Thyroid gland (tissue), 4 donors: ENCODE measurements at regions of chr12 and their contacts with region 1.

Region 1: GRCh38 chr12:56636675-56637540 is 6.8 kb upstream of the BAZ2A start:
- DNase-seq: peak; percentile 99 to 100
- H3K4me3 ChIP-seq: peak overlapping the region in 2 of 3 donors; percentile 57 to 89
- H3K27ac ChIP-seq: peak overlapping the region; percentile 96 to 97 (median 97)
- H3K4me1 ChIP-seq: peaks cover 37 to 43% of the 10 kb centered on the region in 2 donors
- H3K27me3 ChIP-seq: no peaks in the 10 kb centered on the region
- CTCF ChIP-seq: peak in 5 of 6 experiments; percentile 9 to 69 (median 65)
- POLR2A ChIP-seq: peak in 1 of 2 donors; percentile 66

Region 2: GRCh38 chr12:56518570-56518969 is 118.3 kb before region 1 on chr12:
- intact Hi-C with region 1: loop called (anchors 10 kb)
- DNase-seq: no peak
- H3K4me3 ChIP-seq: no peak overlapping the region
- H3K27ac ChIP-seq: peak overlapping the region in 2 of 3 donors; percentile 93 to 96
- H3K4me1 ChIP-seq: peaks cover 31 to 50% of the 10 kb centered on the region in 2 donors
- H3K27me3 ChIP-seq: no peaks in the 10 kb centered on the region
- CTCF ChIP-seq: no peak
- POLR2A ChIP-seq: no peak

Region 3: DNA sequence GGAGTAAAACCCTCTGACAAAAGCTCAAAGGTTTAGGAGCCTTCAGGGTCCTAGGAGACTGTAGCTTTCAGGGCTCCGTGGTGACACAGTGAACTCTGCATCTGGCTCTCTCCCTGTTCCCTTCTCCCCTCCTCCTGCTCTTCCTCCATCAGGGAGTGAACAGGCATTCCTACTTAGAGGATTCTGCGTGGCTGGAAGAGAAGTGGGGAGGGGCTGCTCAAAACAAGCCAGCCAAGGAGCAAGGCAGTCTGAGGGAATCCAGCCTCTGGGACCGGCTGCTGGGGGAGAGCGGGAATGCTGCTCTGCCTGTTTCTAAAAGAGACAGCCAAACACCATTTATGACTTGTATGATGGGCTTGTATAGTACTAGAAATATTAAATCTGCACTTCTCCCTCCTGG is 65.8 kb before region 1 on chr12:
- intact Hi-C with region 1: loop called (anchors 10 kb)
- DNase-seq: no peak
- H3K4me3 ChIP-seq: no peak overlapping the region
- H3K27ac ChIP-seq: peak overlapping the region in 1 of 3 donors; percentile 19
- H3K4me1 ChIP-seq: peaks cover 4 to 9% of the 10 kb centered on the region in 2 donors
- H3K27me3 ChIP-seq: no peaks in the 10 kb centered on the region
- CTCF ChIP-seq: no peak
- POLR2A ChIP-seq: no peak